ENCODE measurements at regions of chr16 and their contacts with region 1.

Region 1: GRCh38 chr16:26598061-26598460 is 468.7 kb upstream of the C16orf82 start:
- DNase-seq: peak; percentile 82
- H3K4me3 Mint-ChIP-seq: peak overlapping the region; percentile 51
- H3K27ac Mint-ChIP-seq: peak overlapping the region; percentile 94
- H3K4me1 Mint-ChIP-seq: peaks cover 76% of the 10 kb centered on the region
- H3K27me3 Mint-ChIP-seq: no peaks in the 10 kb centered on the region

Region 2: GRCh38 chr16:26665162-26665939 is 67.3 kb after region 1 on chr16:
- intact Hi-C with region 1: loop called (anchors 1 kb)
- DNase-seq: no peak
- H3K4me3 Mint-ChIP-seq: no peak overlapping the region
- H3K27ac Mint-ChIP-seq: peak overlapping the region; percentile 29
- H3K4me1 Mint-ChIP-seq: peaks cover 33% of the 10 kb centered on the region
- H3K27me3 Mint-ChIP-seq: peaks cover 9% of the 10 kb centered on the region

Region 3: DNA sequence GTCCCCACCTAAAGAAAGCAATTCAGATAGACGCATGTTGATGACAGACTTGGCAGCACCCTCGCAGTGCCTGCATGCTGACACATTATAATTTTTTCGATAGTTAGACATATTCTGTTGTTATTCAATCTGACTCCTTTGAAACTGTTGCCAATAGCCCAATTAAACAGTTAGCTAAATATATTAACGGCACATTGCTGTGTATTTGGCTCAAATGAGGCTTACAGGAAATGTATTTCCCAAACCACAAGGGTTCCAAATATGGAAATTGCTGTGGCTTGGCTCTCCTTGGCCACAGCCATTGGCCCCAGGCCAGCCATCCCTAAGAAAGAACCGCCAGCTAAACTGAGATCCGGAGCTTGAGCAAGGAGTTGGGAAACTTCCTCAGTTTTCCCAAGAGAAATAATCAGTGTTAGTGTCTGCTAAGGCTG is 499.8 kb after region 1 on chr16:
- intact Hi-C with region 1: no loop called
- DNase-seq: no peak
- H3K4me3 Mint-ChIP-seq: no peak overlapping the region
- H3K27ac Mint-ChIP-seq: no peak overlapping the region
- H3K4me1 Mint-ChIP-seq: no peaks in the 10 kb centered on the region
- H3K27me3 Mint-ChIP-seq: peaks cover 24% of the 10 kb centered on the region

Region 4: GRCh38 chr16:27179500-27180072 is 581.5 kb after region 1 on chr16:
- intact Hi-C with region 1: loop called (anchors 10 kb)
- DNase-seq: peak; percentile 81
- H3K4me3 Mint-ChIP-seq: no peak overlapping the region
- H3K27ac Mint-ChIP-seq: peak overlapping the region; percentile 40
- H3K4me1 Mint-ChIP-seq: peaks cover 38% of the 10 kb centered on the region
- H3K27me3 Mint-ChIP-seq: no peaks in the 10 kb centered on the region

Region 5: DNA sequence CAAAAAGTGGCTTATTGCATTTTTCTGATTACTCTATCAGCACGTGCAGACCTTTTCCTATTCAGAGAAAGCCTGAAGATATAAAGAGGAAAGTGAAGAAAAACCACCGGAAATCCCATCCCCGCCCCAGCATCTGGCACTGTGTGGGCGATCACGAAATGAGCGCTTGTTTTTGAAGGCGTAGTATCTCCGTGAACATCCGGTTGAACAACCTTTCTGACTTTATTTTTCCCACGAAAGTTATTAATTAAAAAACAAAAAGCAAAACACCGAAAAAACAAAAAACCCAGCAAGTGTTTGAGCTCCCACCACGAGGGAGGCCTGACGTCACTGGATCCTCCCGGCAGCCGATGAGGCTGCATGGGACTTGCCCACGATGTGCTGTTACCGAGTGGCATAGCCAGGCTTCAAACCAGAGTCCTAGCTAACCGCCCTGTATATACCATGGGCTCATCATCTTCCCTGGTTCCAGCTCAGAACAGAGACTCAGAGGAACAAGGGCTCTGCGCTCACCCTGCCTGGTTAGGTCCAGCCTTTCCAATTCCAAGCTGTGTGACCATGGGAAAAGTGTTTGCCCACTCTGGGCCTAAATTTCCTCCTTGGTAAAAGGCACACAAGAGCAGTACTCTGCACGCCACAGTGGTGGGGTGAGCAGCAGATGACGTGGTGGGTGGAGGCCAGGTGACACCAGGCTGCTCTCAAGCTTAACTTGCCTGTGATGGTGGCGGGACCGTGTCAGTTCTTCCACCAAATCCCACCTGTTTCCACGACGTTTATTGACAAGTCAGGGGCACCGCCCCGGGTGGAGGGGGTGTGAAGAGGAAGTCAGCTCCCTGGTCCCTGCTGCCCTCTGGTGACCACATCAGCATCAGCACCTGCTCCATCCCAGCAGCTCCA is 769.6 kb after region 1 on chr16:
- intact Hi-C with region 1: loop called (anchors 10 kb)
- DNase-seq: peak; percentile 81
- H3K4me3 Mint-ChIP-seq: peak overlapping the region; percentile 53
- H3K27ac Mint-ChIP-seq: peak overlapping the region; percentile 99
- H3K4me1 Mint-ChIP-seq: peaks cover 65% of the 10 kb centered on the region
- H3K27me3 Mint-ChIP-seq: no peaks in the 10 kb centered on the region

Measured in activated T-helper 2 cell treated with anti-CD3 and anti-CD28 coated beads, Interferon-gamma antibody, Interleukin-2, Interleukin-4, amounts not matched to agents 10 μg/mL and 5 μg/mL and 100 μg/mL, durations not matched to agents 14 hours and 24 hours and 36 hours (primary cell).